HepG2 (cell line): ENCODE measurements at regions of chr14 and their contacts with region 1.

Region 1: GRCh38 chr14:76386915-76387782 is 11.2 kb downstream of the ESRRB start:
- DNase-seq: peak; percentile 57
- ATAC-seq: peak; percentile 96
- H3K4me3 ChIP-seq: no peak overlapping the region
- H3K27ac ChIP-seq: no peak overlapping the region
- H3K4me1 ChIP-seq: peaks cover 10% of the 10 kb centered on the region; the same call in 1 of the 2 replicates
- H3K27me3 ChIP-seq: peaks cover 0 to 8% of the 10 kb centered on the region in 2 experiments; a peak in 4 of 5 replicates
- CTCF ChIP-seq: peak; percentile 93
- EP300 ChIP-seq: no peak
- POLR2A ChIP-seq: no peak
- RAD21 ChIP-seq: peak; percentile 87

Region 2: GRCh38 chr14:75709207-75709812 is 677.8 kb before region 1 on chr14:
- CTCF ChIA-PET with region 1: no interaction called
- POLR2A ChIA-PET with region 1: no interaction called
- in situ Hi-C with region 1: loop called (anchors 25 kb)
- intact Hi-C with region 1: no loop called
- DNase-seq: peak; percentile 67
- ATAC-seq: peak; percentile 47
- H3K4me3 ChIP-seq: no peak overlapping the region
- H3K27ac ChIP-seq: no peak overlapping the region
- H3K4me1 ChIP-seq: peaks cover 25% of the 10 kb centered on the region
- H3K27me3 ChIP-seq: no peaks in the 10 kb centered on the region
- CTCF ChIP-seq: peak; percentile 78
- EP300 ChIP-seq: no peak
- POLR2A ChIP-seq: no peak
- RAD21 ChIP-seq: peak; percentile 49; the same call in 1 of the 2 replicates

Region 3: GRCh38 chr14:75906676-75907280 is 480.4 kb before region 1 on chr14:
- CTCF ChIA-PET with region 1: interaction called, 4 read pairs
- POLR2A ChIA-PET with region 1: no interaction called
- in situ Hi-C with region 1: no loop called
- intact Hi-C with region 1: loop called (anchors 5 kb)
- DNase-seq: peak; percentile 36
- ATAC-seq: no peak
- H3K4me3 ChIP-seq: no peak overlapping the region
- H3K27ac ChIP-seq: no peak overlapping the region
- H3K4me1 ChIP-seq: no peaks in the 10 kb centered on the region
- H3K27me3 ChIP-seq: no peaks in the 10 kb centered on the region
- CTCF ChIP-seq: peak; percentile 65
- EP300 ChIP-seq: no peak
- POLR2A ChIP-seq: no peak
- RAD21 ChIP-seq: peak; percentile 24; the same call in 1 of the 2 replicates

Region 4: GRCh38 chr14:76050797-76051392 is 336.3 kb before region 1 on chr14:
- CTCF ChIA-PET with region 1: interaction called, 27 read pairs
- POLR2A ChIA-PET with region 1: no interaction called
- in situ Hi-C with region 1: loop called (anchors 10 kb)
- intact Hi-C with region 1: loop called (anchors 1 kb)
- DNase-seq: peak; percentile 47
- ATAC-seq: peak; percentile 62
- H3K4me3 ChIP-seq: no peak overlapping the region
- H3K27ac ChIP-seq: no peak overlapping the region
- H3K4me1 ChIP-seq: no peaks in the 10 kb centered on the region
- H3K27me3 ChIP-seq: peaks cover 0 to 10% of the 10 kb centered on the region in 2 experiments; a peak in 2 of 5 replicates
- CTCF ChIP-seq: peak; percentile 83
- EP300 ChIP-seq: no peak
- POLR2A ChIP-seq: no peak
- RAD21 ChIP-seq: peak; percentile 78

Region 5: GRCh38 chr14:76056128-76056527 is 331.0 kb before region 1 on chr14:
- CTCF ChIA-PET with region 1: interaction called, 27 read pairs
- POLR2A ChIA-PET with region 1: no interaction called
- in situ Hi-C with region 1: loop called (anchors 10 kb)
- intact Hi-C with region 1: loop called (anchors 1 kb)
- DNase-seq: no peak
- ATAC-seq: peak; percentile 48; the same call in 2 of the 3 replicates
- H3K4me3 ChIP-seq: no peak overlapping the region
- H3K27ac ChIP-seq: no peak overlapping the region
- H3K4me1 ChIP-seq: no peaks in the 10 kb centered on the region
- H3K27me3 ChIP-seq: peaks cover 0 to 8% of the 10 kb centered on the region in 2 experiments; a peak in 3 of 5 replicates
- CTCF ChIP-seq: peak; percentile 21; the same call in 1 of the 2 replicates
- EP300 ChIP-seq: no peak
- POLR2A ChIP-seq: no peak
- RAD21 ChIP-seq: no peak

Region 6: DNA sequence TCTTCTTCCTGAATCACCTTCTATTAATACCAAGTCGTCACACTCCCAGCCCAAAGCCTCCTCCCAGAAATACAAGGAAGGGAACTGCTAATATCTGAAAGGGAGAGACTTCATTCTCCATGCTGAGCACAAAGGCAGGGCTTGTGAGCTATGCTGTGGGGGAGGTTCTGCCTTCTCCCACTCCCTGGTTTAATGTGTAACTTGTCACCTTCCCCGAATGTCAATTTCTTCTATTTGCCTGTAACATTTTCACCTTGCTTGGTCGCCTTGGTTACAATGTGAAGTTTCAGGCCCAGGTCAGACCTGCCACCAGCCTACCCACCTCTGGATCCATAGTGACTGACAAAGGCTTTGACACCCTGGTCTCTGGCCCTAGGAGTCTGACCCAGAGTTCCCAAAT is 93.2 kb before region 1 on chr14:
- CTCF ChIA-PET with region 1: no interaction called
- POLR2A ChIA-PET with region 1: no interaction called
- in situ Hi-C with region 1: no loop called
- intact Hi-C with region 1: no loop called
- DNase-seq: peak; percentile 73
- ATAC-seq: peak; percentile 99
- H3K4me3 ChIP-seq: peak overlapping the region in 1 of 3 experiments; percentile 31; a peak in 1 of 6 replicates
- H3K27ac ChIP-seq: peak overlapping the region; percentile 60
- H3K4me1 ChIP-seq: peaks cover 22% of the 10 kb centered on the region
- H3K27me3 ChIP-seq: no peaks in the 10 kb centered on the region
- CTCF ChIP-seq: no peak
- EP300 ChIP-seq: no peak
- POLR2A ChIP-seq: no peak
- RAD21 ChIP-seq: no peak

Region 7: GRCh38 chr14:76352639-76353281 is 34.4 kb before region 1 on chr14:
- CTCF ChIA-PET with region 1: no interaction called
- POLR2A ChIA-PET with region 1: no interaction called
- in situ Hi-C with region 1: no loop called
- intact Hi-C with region 1: loop called (anchors 1 kb)
- DNase-seq: peak; percentile 43
- ATAC-seq: peak; percentile 96
- H3K4me3 ChIP-seq: peak overlapping the region in 2 of 3 experiments; percentile 28 to 59; a peak in 3 of 6 replicates
- H3K27ac ChIP-seq: no peak overlapping the region
- H3K4me1 ChIP-seq: peaks cover 12% of the 10 kb centered on the region; the same call in 1 of the 2 replicates
- H3K27me3 ChIP-seq: no peaks in the 10 kb centered on the region
- CTCF ChIP-seq: peak; percentile 100
- EP300 ChIP-seq: no peak
- POLR2A ChIP-seq: no peak
- RAD21 ChIP-seq: peak; percentile 94

Region 8: GRCh38 chr14:76497537-76498462 is 110.7 kb after region 1 on chr14:
- CTCF ChIA-PET with region 1: no interaction called
- POLR2A ChIA-PET with region 1: no interaction called
- in situ Hi-C with region 1: no loop called
- intact Hi-C with region 1: no loop called
- DNase-seq: no peak
- ATAC-seq: peak; percentile 62
- H3K4me3 ChIP-seq: no peak overlapping the region
- H3K27ac ChIP-seq: no peak overlapping the region
- H3K4me1 ChIP-seq: no peaks in the 10 kb centered on the region
- H3K27me3 ChIP-seq: peaks cover 2 to 7% of the 10 kb centered on the region in 2 experiments; a peak in 2 of 5 replicates
- CTCF ChIP-seq: peak; percentile 41
- EP300 ChIP-seq: no peak
- POLR2A ChIP-seq: no peak
- RAD21 ChIP-seq: no peak

Region 9: GRCh38 chr14:76647697-76648298 is 260.6 kb after region 1 on chr14:
- CTCF ChIA-PET with region 1: no interaction called
- POLR2A ChIA-PET with region 1: no interaction called
- in situ Hi-C with region 1: no loop called
- intact Hi-C with region 1: loop called (anchors 10 kb)
- DNase-seq: peak; percentile 52
- ATAC-seq: peak; percentile 75
- H3K4me3 ChIP-seq: no peak overlapping the region
- H3K27ac ChIP-seq: no peak overlapping the region
- H3K4me1 ChIP-seq: peaks cover 14% of the 10 kb centered on the region
- H3K27me3 ChIP-seq: peaks cover 0 to 10% of the 10 kb centered on the region in 2 experiments; a peak in 3 of 5 replicates
- CTCF ChIP-seq: peak; percentile 78
- EP300 ChIP-seq: no peak
- POLR2A ChIP-seq: no peak
- RAD21 ChIP-seq: 0 out of 2 replicates have a peak, but pooled peaks have one; percentile 22